CD8-positive, alpha-beta T cell (primary cell): ENCODE measurements at regions of chr4 and their contacts with region 1.

Region 1: GRCh38 chr4:81471588-81472288 is at the start of gene RASGEF1B:
- DNase-seq: peak; percentile 85 to 98 (median 95)
- ATAC-seq: peak; percentile 87
- H3K4me3 ChIP-seq: peak within 1 kb of the TSS; percentile 69 to 78
- H3K4me3 Mint-ChIP-seq: peak within 1 kb of the TSS; percentile 98
- H3K27ac ChIP-seq: peak within 1 kb of the TSS; percentile 91 to 96
- H3K27ac Mint-ChIP-seq: peak within 1 kb of the TSS; percentile 96
- H3K4me1 ChIP-seq: peaks cover 23% of the 10 kb centered on the region
- H3K4me1 Mint-ChIP-seq: peaks cover 42% of the 10 kb centered on the region
- H3K27me3 ChIP-seq: no peaks in the 10 kb centered on the region
- H3K27me3 Mint-ChIP-seq: no peaks in the 10 kb centered on the region
- CTCF ChIP-seq: no peak
- total RNA-seq, gene RASGEF1B: 103 to 110 TPM

Region 2: GRCh38 chr4:81389720-81390119 is 82.0 kb before region 1 on chr4:
- CTCF ChIA-PET with region 1: no interaction called
- POLR2A ChIA-PET with region 1: no interaction called
- intact Hi-C with region 1: no loop called
- DNase-seq: no peak
- ATAC-seq: no peak
- H3K4me3 ChIP-seq: no peak overlapping the region
- H3K4me3 Mint-ChIP-seq: no peak overlapping the region
- H3K27ac ChIP-seq: no peak overlapping the region
- H3K27ac Mint-ChIP-seq: no peak overlapping the region
- H3K4me1 ChIP-seq: no peaks in the 10 kb centered on the region
- H3K4me1 Mint-ChIP-seq: no peaks in the 10 kb centered on the region
- H3K27me3 ChIP-seq: no peaks in the 10 kb centered on the region
- H3K27me3 Mint-ChIP-seq: peaks cover 7% of the 10 kb centered on the region
- CTCF ChIP-seq: no peak

Region 3: GRCh38 chr4:81454499-81454898 is 17.2 kb before region 1 on chr4:
- CTCF ChIA-PET with region 1: interaction called, 11 read pairs
- POLR2A ChIA-PET with region 1: interaction called, 4 read pairs
- intact Hi-C with region 1: no loop called
- DNase-seq: peak in 5 of 9 experiments; percentile 16 to 41 (median 28)
- ATAC-seq: peak; percentile 73
- H3K4me3 ChIP-seq: no peak overlapping the region
- H3K4me3 Mint-ChIP-seq: no peak overlapping the region
- H3K27ac ChIP-seq: no peak overlapping the region
- H3K27ac Mint-ChIP-seq: no peak overlapping the region
- H3K4me1 ChIP-seq: no peaks in the 10 kb centered on the region
- H3K4me1 Mint-ChIP-seq: peaks cover 10% of the 10 kb centered on the region
- H3K27me3 ChIP-seq: no peaks in the 10 kb centered on the region
- H3K27me3 Mint-ChIP-seq: no peaks in the 10 kb centered on the region
- CTCF ChIP-seq: no peak

Region 4: DNA sequence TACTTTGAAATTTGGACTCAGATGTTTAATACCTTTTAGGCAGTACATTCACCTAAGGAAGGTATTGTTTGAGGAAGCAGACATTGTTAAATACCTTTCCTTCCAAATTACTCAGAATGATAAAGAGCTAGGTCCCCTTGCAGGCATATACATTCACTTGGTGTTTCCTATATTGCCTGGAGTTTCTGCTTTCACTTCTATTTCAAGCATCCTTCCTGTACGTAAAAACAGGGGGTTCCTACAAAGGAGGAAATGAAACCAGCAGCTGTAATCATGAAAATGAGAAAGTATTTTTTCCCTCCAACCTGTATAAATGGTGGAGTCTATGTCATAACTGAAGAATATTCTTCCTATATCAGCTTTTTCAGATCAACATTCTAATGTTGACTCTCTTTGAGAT is 90.4 kb after region 1 on chr4:
- CTCF ChIA-PET with region 1: interaction called, 3 read pairs
- POLR2A ChIA-PET with region 1: interaction called, 7 read pairs
- intact Hi-C with region 1: loop called (anchors 5 kb)
- DNase-seq: peak in 2 of 9 experiments; percentile 47 to 76
- ATAC-seq: peak; percentile 88
- H3K4me3 ChIP-seq: no peak overlapping the region
- H3K4me3 Mint-ChIP-seq: peak overlapping the region; percentile 19
- H3K27ac ChIP-seq: peak overlapping the region in 1 of 2 experiments; percentile 50
- H3K27ac Mint-ChIP-seq: peak overlapping the region; percentile 73
- H3K4me1 ChIP-seq: peaks cover 5% of the 10 kb centered on the region
- H3K4me1 Mint-ChIP-seq: peaks cover 10% of the 10 kb centered on the region
- H3K27me3 ChIP-seq: no peaks in the 10 kb centered on the region
- H3K27me3 Mint-ChIP-seq: no peaks in the 10 kb centered on the region
- CTCF ChIP-seq: no peak

Region 5: DNA sequence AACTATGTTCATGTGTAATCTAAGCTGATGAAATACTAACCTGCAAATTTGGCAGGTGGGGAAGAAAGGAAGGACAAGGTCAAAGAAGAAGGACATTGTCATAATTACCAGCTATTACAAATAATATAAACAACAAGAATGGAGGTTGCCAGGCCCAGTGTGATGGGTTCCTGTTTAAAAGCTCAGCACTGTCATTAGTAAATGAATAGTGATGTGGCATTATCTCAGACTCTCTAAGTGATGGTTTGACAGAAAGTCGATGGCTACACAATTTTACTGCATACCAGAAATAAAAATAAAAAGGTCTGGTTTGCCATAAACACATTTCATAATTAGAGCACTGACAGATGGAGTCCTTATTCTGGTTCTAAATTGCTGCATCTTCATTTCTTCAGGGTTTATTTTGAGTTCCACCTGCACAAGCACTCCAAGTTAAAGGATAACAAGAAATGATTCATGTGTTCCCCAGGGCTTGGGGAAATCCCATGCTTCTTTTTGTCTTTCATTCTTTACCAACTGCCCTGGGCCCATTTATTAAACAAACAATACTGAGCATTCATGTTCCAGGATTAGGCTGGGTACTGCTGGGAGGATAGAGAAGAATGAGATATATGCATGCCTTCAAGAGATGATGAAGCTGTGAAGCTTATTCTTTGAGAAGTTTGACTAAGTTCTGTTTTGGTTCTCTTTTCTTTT is 367.8 kb after region 1 on chr4:
- CTCF ChIA-PET with region 1: interaction called, 205 read pairs
- POLR2A ChIA-PET with region 1: interaction called, 6 read pairs
- intact Hi-C with region 1: loop called (anchors 1 kb)
- DNase-seq: no peak
- ATAC-seq: no peak
- H3K4me3 ChIP-seq: no peak overlapping the region
- H3K4me3 Mint-ChIP-seq: no peak overlapping the region
- H3K27ac ChIP-seq: no peak overlapping the region
- H3K27ac Mint-ChIP-seq: no peak overlapping the region
- H3K4me1 ChIP-seq: no peaks in the 10 kb centered on the region
- H3K4me1 Mint-ChIP-seq: no peaks in the 10 kb centered on the region
- H3K27me3 ChIP-seq: no peaks in the 10 kb centered on the region
- H3K27me3 Mint-ChIP-seq: no peaks in the 10 kb centered on the region
- CTCF ChIP-seq: no peak

Region 6: DNA sequence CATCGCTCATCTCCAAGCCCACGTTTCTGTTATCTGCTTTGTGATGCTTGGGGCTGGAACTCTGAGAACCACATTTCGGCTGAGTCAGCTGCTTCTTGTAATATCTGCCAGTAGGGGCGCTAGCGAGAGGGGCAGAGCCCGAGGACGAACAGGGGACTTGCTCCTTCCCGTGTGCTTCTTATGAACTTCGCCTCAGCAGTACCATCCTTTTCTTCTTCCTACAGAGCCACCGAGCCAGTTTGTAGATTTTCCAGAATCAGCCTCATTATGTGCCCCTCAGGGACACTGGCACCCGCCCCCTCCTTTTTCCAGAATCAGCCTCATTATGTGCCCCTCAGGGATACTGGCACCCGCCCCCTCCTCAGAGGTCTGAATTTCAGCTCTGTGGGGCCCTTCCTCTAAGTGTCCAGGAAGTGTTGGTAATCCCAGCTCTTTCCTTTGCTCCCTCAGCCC is 441.7 kb after region 1 on chr4:
- CTCF ChIA-PET with region 1: no interaction called
- POLR2A ChIA-PET with region 1: no interaction called
- intact Hi-C with region 1: loop called in 1 of 2 experiments (anchors 5 kb)
- DNase-seq: peak; percentile 6 to 68 (median 53)
- ATAC-seq: peak; percentile 65
- H3K4me3 ChIP-seq: no peak overlapping the region
- H3K4me3 Mint-ChIP-seq: no peak overlapping the region
- H3K27ac ChIP-seq: no peak overlapping the region
- H3K27ac Mint-ChIP-seq: no peak overlapping the region
- H3K4me1 ChIP-seq: no peaks in the 10 kb centered on the region
- H3K4me1 Mint-ChIP-seq: peaks cover 2% of the 10 kb centered on the region
- H3K27me3 ChIP-seq: peaks cover 0 to 2% of the 10 kb centered on the region in 2 experiments
- H3K27me3 Mint-ChIP-seq: peaks cover 8% of the 10 kb centered on the region
- CTCF ChIP-seq: peak; percentile 71

Region 7: DNA sequence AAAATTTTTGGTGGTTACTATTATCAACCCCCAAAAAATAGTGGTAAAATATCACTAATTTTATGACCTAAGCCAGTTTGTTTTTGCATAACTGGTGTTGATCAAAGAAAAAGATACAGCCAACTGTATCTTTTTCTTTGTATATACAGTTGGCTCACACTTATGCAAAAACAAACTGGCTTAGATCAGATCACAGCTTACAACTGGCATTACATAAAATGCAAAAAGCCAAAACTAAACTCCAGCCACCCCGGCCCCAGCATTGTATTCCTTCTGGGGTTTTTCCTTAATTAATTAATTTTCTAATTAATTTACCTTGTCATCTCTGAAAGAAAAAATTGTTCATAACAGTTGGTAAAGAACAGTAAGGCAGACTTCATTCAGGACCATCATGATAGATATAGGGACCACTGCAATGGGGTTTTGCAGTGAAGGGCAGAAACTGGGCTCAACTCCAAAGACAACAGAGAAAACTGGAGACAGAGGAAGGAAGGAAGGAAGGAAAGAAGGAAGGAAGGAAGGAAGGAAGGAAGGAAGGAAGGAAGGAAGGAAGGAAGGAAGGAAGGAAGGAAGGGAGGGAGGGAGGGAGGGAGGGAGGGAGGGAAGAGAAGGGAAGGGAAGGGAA is 699.9 kb after region 1 on chr4:
- CTCF ChIA-PET with region 1: no interaction called
- POLR2A ChIA-PET with region 1: no interaction called
- intact Hi-C with region 1: no loop called
- DNase-seq: no peak
- ATAC-seq: no peak
- H3K4me3 ChIP-seq: no peak overlapping the region
- H3K4me3 Mint-ChIP-seq: no peak overlapping the region
- H3K27ac ChIP-seq: no peak overlapping the region
- H3K27ac Mint-ChIP-seq: no peak overlapping the region
- H3K4me1 ChIP-seq: no peaks in the 10 kb centered on the region
- H3K4me1 Mint-ChIP-seq: no peaks in the 10 kb centered on the region
- H3K27me3 ChIP-seq: no peaks in the 10 kb centered on the region
- H3K27me3 Mint-ChIP-seq: no peaks in the 10 kb centered on the region
- CTCF ChIP-seq: no peak

Region 8: DNA sequence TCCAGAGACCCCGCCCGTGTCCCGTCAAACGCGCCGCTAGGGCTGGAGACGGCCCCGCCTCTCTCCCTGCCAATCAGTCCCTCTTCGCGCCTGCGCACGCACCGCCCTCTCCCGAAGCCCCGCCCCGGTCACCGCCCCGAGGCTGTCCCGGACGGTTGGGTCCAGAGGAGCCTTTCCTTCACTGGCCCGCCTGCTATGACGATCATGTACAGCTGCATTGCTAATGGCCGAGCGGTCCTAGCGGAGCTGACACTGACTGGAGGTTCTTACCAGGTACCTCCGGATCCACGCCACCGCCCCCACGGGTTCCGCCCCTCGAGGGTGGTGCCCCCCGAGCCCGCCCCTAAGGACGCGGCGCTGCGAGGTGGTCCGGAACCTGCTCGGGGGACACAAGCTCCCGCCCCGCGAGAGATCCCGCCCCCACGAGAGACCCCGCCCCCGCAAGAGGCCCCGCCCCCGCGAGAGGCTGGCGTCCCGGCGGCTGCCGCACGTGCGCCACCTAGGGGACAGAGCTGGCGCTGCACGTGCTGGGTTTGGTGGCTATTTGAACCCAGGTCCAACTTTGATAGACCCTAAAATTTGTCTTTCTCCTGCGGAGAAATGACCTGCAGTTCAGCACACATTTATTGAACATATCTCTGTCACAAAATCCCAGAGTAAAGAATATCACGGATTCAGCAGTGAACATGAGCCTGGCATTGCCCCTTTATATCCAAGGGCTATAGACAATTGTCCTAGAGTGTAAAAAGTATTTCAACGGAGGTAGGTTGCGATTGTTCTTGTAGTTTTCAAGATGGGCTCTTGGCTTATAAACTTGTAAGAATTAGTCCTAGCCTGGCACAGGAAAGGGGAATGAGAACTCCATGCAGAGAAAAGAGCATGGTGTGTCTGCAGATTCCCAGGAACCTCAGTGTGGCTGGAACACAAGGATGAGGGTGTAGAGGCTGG is 813.4 kb after region 1 on chr4:
- CTCF ChIA-PET with region 1: interaction called, 3 read pairs
- POLR2A ChIA-PET with region 1: interaction called, 5 read pairs
- intact Hi-C with region 1: loop called (anchors 2 to 5 kb)
- DNase-seq: peak; percentile 98 to 99 (median 99)
- ATAC-seq: peak; percentile 91
- H3K4me3 ChIP-seq: peak overlapping the region; percentile 57 to 63
- H3K4me3 Mint-ChIP-seq: peak overlapping the region; percentile 88
- H3K27ac ChIP-seq: peak overlapping the region; percentile 43 to 68
- H3K27ac Mint-ChIP-seq: peak overlapping the region; percentile 41
- H3K4me1 ChIP-seq: peaks cover 12% of the 10 kb centered on the region
- H3K4me1 Mint-ChIP-seq: peaks cover 15% of the 10 kb centered on the region
- H3K27me3 ChIP-seq: peaks cover 0 to 5% of the 10 kb centered on the region in 2 experiments
- H3K27me3 Mint-ChIP-seq: no peaks in the 10 kb centered on the region
- CTCF ChIP-seq: peak; percentile 97

Region 9: GRCh38 chr4:83455281-83456129 is 1983.8 kb after region 1 on chr4 and contains the starts of genes HELQ and MRPS18C:
- CTCF ChIA-PET with region 1: no interaction called
- POLR2A ChIA-PET with region 1: no interaction called
- intact Hi-C with region 1: loop called (anchors 5 to 10 kb)
- DNase-seq: peak; percentile 89 to 100 (median 92)
- ATAC-seq: peak; percentile 86
- H3K4me3 ChIP-seq: peak within 1 kb of the TSS; percentile 62 to 91
- H3K4me3 Mint-ChIP-seq: peak within 1 kb of the TSS; percentile 100
- H3K27ac ChIP-seq: peak within 1 kb of the TSS; percentile 99
- H3K27ac Mint-ChIP-seq: peak within 1 kb of the TSS; percentile 100
- H3K4me1 ChIP-seq: peaks cover 27% of the 10 kb centered on the region
- H3K4me1 Mint-ChIP-seq: peaks cover 65% of the 10 kb centered on the region
- H3K27me3 ChIP-seq: no peaks in the 10 kb centered on the region
- H3K27me3 Mint-ChIP-seq: no peaks in the 10 kb centered on the region
- CTCF ChIP-seq: no peak
- total RNA-seq, gene HELQ: 25.6 to 28.0 TPM
- total RNA-seq, gene MRPS18C: 17.7 to 24.1 TPM